A673 (cell line): ENCODE measurements at regions of chr2 and their contacts with region 1.

Region 1: GRCh38 chr2:152189622-152190495 is 14.3 kb upstream of the STAM2 start:
- DNase-seq: peak; percentile 84
- H3K4me3 ChIP-seq: no peak overlapping the region
- H3K27ac ChIP-seq: no peak overlapping the region
- H3K4me1 ChIP-seq: no peaks in the 10 kb centered on the region
- H3K27me3 ChIP-seq: no peaks in the 10 kb centered on the region
- CTCF ChIP-seq: peak; percentile 89

Region 2: GRCh38 chr2:152263911-152264310 is 74.1 kb after region 1 on chr2:
- CTCF ChIA-PET with region 1: no interaction called
- POLR2A ChIA-PET with region 1: no interaction called
- intact Hi-C with region 1: no loop called
- DNase-seq: no peak
- H3K4me3 ChIP-seq: no peak overlapping the region
- H3K27ac ChIP-seq: no peak overlapping the region
- H3K4me1 ChIP-seq: peaks cover 3% of the 10 kb centered on the region
- H3K27me3 ChIP-seq: no peaks in the 10 kb centered on the region
- CTCF ChIP-seq: no peak

Region 3: DNA sequence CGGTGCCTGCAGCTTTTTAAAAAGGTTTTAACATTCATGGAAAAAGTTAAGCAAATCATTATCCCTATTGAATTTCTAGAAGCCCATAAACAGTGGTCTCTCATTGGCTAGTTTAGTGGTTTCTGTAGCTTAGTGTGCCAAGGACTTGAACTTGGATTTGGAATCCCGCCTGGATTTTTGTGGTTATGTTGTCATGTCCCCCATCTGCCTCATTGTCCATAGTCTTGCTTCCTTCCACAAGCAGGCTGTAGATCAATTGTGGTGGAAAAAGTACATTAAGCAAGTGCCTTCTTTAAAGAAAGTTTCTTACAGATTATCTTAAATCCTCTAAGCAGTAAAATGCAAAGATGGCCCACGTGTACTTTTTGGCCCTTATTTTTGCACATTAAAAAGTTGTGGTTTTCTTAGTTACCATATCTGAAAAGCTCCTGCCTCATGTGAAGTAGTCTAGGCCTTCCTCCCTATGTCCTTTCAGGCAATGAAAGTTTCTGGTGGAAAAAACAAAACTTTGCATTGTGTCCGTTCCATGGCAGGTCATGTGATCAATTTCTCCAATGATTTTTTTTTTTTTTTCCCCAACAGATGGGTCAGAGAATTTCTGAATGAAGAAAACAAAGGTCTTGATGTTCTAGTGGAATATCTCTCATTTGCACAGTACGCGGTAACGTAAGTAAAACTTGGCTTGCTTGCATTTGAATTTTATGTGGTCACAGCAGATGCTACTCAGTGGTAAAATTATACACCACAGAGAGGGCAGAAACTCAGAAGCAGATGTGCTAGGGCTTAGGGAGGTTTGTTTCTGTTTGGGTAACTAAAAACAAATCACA is 368.5 kb after region 1 on chr2:
- CTCF ChIA-PET with region 1: no interaction called
- POLR2A ChIA-PET with region 1: no interaction called
- intact Hi-C with region 1: loop called (anchors 5 kb)
- DNase-seq: no peak
- H3K4me3 ChIP-seq: no peak overlapping the region
- H3K27ac ChIP-seq: peak overlapping the region; percentile 20
- H3K4me1 ChIP-seq: peaks cover 21% of the 10 kb centered on the region
- H3K27me3 ChIP-seq: no peaks in the 10 kb centered on the region
- CTCF ChIP-seq: no peak